ENCODE measurements at regions of chr5 and their contacts with region 1.

Region 1: GRCh38 chr5:140220032-140220697 is 45.2 kb downstream of the CYSTM1 start:
- DNase-seq: no peak
- H3K4me3 ChIP-seq: no peak overlapping the region
- H3K27ac ChIP-seq: peak overlapping the region; percentile 70
- H3K4me1 ChIP-seq: peaks cover 30% of the 10 kb centered on the region
- H3K27me3 ChIP-seq: no peaks in the 10 kb centered on the region
- CTCF ChIP-seq: no peak

Region 2: GRCh38 chr5:140189977-140190871 is 29.9 kb before region 1 on chr5:
- intact Hi-C with region 1: loop called (anchors 5 kb)
- DNase-seq: no peak
- H3K4me3 ChIP-seq: no peak overlapping the region
- H3K27ac ChIP-seq: peak overlapping the region; percentile 35
- H3K4me1 ChIP-seq: peaks cover 14% of the 10 kb centered on the region
- H3K27me3 ChIP-seq: no peaks in the 10 kb centered on the region
- CTCF ChIP-seq: no peak

Measured in colonic mucosa (tissue), 4 donors.